Prostate gland (tissue), 2 donors: ENCODE measurements at regions of chr21 and their contacts with region 1.

Region 1: GRCh38 chr21:32329331-32329730 is 30.7 kb downstream of the MRAP start:
- DNase-seq: no peak
- H3K4me3 ChIP-seq: no peak overlapping the region
- H3K27ac ChIP-seq: peak overlapping the region; percentile 38 to 46
- H3K4me1 ChIP-seq: no peaks in the 10 kb centered on the region
- H3K27me3 ChIP-seq: no peaks in the 10 kb centered on the region
- CTCF ChIP-seq: no peak
- POLR2A ChIP-seq: no peak

Region 2: DNA sequence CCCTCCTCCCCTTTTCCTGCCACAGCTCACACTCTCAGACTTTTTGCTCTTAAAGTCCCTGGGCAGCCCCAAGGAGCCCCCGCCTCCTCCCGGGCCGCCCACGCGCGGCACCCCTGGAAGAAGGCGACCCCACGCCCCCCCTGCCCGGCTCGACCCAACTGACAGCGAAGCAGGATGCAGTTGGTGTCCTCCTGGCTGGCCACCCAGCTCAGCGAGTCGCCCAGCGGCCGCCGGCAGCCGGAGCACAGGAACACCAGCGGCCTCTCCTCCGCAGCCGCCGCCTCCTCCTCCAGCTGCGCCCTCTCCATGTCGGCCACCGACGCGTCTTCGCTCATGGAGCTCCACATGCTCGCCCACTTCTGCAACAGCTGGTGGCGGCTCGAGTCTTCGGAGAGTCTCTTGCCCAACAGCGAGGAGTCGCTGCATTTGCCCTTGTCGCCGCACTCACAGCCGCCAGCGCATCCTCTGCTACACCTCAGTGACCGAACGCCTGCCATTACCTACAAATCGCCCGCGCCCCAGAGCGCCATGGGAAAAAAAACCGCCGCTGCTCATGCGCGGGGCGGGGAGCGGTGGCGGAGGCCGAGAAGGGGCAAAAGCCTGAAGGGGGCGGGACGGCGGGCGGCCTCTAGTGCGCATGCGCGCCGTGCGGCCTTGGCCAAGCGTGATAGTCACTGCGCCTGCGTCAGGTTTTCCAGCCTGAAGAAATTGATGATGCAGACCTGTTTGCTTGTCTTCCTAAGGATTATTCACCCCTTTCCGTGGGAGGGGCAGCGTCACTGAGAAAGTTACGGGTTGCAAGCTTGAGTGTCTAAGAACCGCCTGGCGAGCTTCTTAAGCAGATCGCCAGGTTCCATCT is 50.6 kb before region 1 on chr21 and contains the start of gene MIS18A:
- intact Hi-C with region 1: loop called (anchors 5 kb)
- DNase-seq: peak; percentile 91
- H3K4me3 ChIP-seq: peak within 1 kb of the TSS; percentile 72 to 74
- H3K27ac ChIP-seq: peak within 1 kb of the TSS; percentile 60 to 71
- H3K4me1 ChIP-seq: peaks cover 15% of the 10 kb centered on the region
- H3K27me3 ChIP-seq: no peaks in the 10 kb centered on the region
- CTCF ChIP-seq: peak in 3 of 4 experiments; percentile 10 to 50 (median 40)
- POLR2A ChIP-seq: peak; percentile 80
- total RNA-seq, gene MIS18A: 10.7 to 17.8 TPM